HCT116 (cell line): ENCODE measurements at regions of chr19 and their contacts with region 1.

Region 1: GRCh38 chr19:45059278-45059965 is 16.9 kb downstream of the ZNF296 start:
- DNase-seq: peak; percentile 62
- ATAC-seq: peak; percentile 84
- H3K4me3 ChIP-seq: no peak overlapping the region
- H3K27ac ChIP-seq: no peak overlapping the region
- H3K4me1 ChIP-seq: no peaks in the 10 kb centered on the region
- H3K27me3 ChIP-seq: no peaks in the 10 kb centered on the region
- CTCF ChIP-seq: peak; percentile 67 to 95 (median 90); a peak in 5 of 6 replicates
- POLR2A ChIP-seq: no peak
- RAD21 ChIP-seq: peak; percentile 76

Region 2: GRCh38 chr19:44903602-44904425 is 155.6 kb before region 1 on chr19:
- CTCF ChIA-PET with region 1: interaction called, 3 read pairs
- POLR2A ChIA-PET with region 1: no interaction called
- RAD21 ChIA-PET with region 1: no interaction called
- intact Hi-C with region 1: loop called (anchors 5 kb)
- DNase-seq: no peak
- ATAC-seq: peak; percentile 61
- H3K4me3 ChIP-seq: no peak overlapping the region
- H3K27ac ChIP-seq: peak overlapping the region; percentile 37
- H3K4me1 ChIP-seq: peaks cover 4 to 32% of the 10 kb centered on the region in 2 experiments; a peak in 3 of 4 replicates
- H3K27me3 ChIP-seq: no peaks in the 10 kb centered on the region
- CTCF ChIP-seq: peak; percentile 80 to 98 (median 97)
- POLR2A ChIP-seq: no peak
- RAD21 ChIP-seq: peak; percentile 89

Region 3: GRCh38 chr19:44988896-44989556 is 70.4 kb before region 1 on chr19:
- CTCF ChIA-PET with region 1: interaction called, 6 read pairs
- POLR2A ChIA-PET with region 1: no interaction called
- RAD21 ChIA-PET with region 1: no interaction called
- intact Hi-C with region 1: loop called (anchors 1 kb)
- DNase-seq: peak; percentile 26
- ATAC-seq: peak; percentile 87
- H3K4me3 ChIP-seq: no peak overlapping the region
- H3K27ac ChIP-seq: no peak overlapping the region
- H3K4me1 ChIP-seq: no peaks in the 10 kb centered on the region
- H3K27me3 ChIP-seq: no peaks in the 10 kb centered on the region
- CTCF ChIP-seq: peak; percentile 62 to 82 (median 71); a peak in 5 of 6 replicates
- POLR2A ChIP-seq: no peak
- RAD21 ChIP-seq: peak; percentile 65

Region 4: DNA sequence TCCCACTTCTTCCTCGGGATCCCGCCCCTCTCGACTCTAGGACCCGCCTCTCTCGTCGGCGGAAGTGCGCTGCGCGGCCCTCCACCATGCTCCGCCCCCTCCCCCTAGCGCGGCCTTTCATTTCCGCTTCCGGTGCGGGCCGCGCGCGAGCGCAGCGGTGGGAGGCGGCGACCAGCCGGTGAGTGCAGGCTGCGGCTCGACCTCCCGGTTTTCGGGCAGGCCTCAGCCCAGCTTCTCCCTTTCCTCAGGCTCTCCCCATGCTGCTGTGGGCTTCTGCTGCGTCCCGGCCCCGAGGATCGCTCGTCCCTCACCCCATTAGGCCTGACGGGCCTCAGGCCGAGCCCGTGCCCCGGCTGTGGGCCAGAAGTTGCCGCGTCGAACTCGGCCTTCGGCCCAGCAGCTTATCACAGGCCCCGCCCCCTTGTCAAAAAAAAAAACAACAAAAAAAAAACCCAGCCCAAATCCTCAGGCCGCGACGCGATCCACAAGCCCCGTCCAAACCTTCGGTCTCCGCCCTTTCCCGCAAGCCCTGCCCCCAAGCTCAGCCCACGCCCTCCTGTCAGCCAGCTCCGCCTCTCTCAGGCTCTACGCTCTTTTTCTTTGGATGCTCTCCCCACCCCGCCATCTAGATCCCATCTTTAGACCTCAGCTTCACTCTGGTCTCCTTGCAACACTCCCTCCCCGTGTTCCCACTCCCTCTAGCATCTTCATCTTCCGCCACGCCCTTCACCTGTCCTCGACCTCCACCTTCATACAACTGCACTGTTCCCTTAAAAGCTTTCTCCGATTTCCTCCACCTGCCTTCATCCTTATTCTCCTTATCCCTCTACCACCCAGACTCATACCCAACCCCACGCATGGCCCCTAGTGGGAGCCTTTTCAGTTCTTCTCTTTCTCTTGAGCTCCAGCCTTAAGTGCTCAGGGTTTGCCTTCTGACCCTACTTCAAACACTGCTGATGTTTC is 20.2 kb before region 1 on chr19 and contains the start of gene CLASRP:
- CTCF ChIA-PET with region 1: interaction called, 18 read pairs
- POLR2A ChIA-PET with region 1: no interaction called
- RAD21 ChIA-PET with region 1: no interaction called
- intact Hi-C with region 1: no loop called
- DNase-seq: peak; percentile 71
- ATAC-seq: peak; percentile 96
- H3K4me3 ChIP-seq: peak within 1 kb of the TSS; percentile 94 to 95
- H3K27ac ChIP-seq: peak within 1 kb of the TSS; percentile 89
- H3K4me1 ChIP-seq: peaks cover 7 to 9% of the 10 kb centered on the region in 2 experiments
- H3K27me3 ChIP-seq: no peaks in the 10 kb centered on the region
- CTCF ChIP-seq: no peak
- POLR2A ChIP-seq: peak; percentile 77
- RAD21 ChIP-seq: no peak
- total RNA-seq, gene CLASRP: 79.9 TPM

Region 5: DNA sequence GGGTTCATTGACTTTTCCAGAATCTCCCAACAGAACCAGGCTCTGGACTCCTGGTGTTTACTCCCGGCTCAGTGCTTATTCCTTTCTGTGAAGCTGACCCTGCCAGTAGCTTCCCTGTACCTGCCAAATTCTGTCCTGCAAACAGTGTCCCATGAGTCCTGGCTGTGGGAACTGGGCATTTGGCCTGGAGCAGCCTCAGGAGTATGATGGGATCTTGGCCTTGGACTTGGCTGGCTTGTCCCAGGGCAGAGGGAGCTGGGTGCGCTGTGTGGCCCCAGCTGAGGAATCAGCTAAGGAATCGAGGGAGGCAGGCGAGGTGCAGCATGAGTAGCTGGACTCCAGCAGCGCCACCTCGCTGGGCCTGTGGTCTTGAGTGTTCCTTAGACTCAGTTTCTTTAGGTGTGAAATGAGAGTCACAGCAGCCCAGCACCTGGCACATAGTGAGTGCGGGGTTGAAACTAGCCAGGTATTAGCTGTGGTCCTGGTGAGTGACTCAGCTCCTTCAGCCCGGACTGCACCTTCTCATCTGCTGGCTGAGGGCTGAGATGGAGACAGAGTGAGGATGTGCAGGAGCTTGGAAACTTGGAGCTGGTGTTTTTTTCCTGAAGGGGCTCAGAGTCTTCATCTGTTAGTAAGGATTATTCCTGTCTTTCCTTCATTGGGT is 10.2 kb before region 1 on chr19:
- CTCF ChIA-PET with region 1: interaction called, 12 read pairs
- POLR2A ChIA-PET with region 1: no interaction called
- RAD21 ChIA-PET with region 1: no interaction called
- intact Hi-C with region 1: no loop called
- DNase-seq: no peak
- ATAC-seq: peak; percentile 29; the same call in 1 of the 2 replicates
- H3K4me3 ChIP-seq: no peak overlapping the region
- H3K27ac ChIP-seq: peak overlapping the region; percentile 34
- H3K4me1 ChIP-seq: peaks cover 7 to 27% of the 10 kb centered on the region in 2 experiments
- H3K27me3 ChIP-seq: no peaks in the 10 kb centered on the region
- CTCF ChIP-seq: no peak
- POLR2A ChIP-seq: no peak
- RAD21 ChIP-seq: no peak

Region 6: GRCh38 chr19:45092747-45093678 is 33.6 kb after region 1 on chr19 and contains the start of gene PPP1R37:
- CTCF ChIA-PET with region 1: interaction called, 10 read pairs
- POLR2A ChIA-PET with region 1: no interaction called
- RAD21 ChIA-PET with region 1: no interaction called
- intact Hi-C with region 1: no loop called
- DNase-seq: peak; percentile 98
- ATAC-seq: peak; percentile 71
- H3K4me3 ChIP-seq: peak within 1 kb of the TSS; percentile 94 to 96
- H3K27ac ChIP-seq: peak within 1 kb of the TSS; percentile 84
- H3K4me1 ChIP-seq: peaks cover 13 to 57% of the 10 kb centered on the region in 2 experiments; a peak in 3 of 4 replicates
- H3K27me3 ChIP-seq: no peaks in the 10 kb centered on the region
- CTCF ChIP-seq: peak in 2 of 3 experiments; percentile 10 to 32; a peak in 1 of 6 replicates
- POLR2A ChIP-seq: peak; percentile 26
- RAD21 ChIP-seq: no peak
- total RNA-seq, gene PPP1R37: 32.7 TPM